Posterior vena cava (tissue), 2 donors: ENCODE measurements at regions of chr2 and their contacts with region 1.

Region 1: DNA sequence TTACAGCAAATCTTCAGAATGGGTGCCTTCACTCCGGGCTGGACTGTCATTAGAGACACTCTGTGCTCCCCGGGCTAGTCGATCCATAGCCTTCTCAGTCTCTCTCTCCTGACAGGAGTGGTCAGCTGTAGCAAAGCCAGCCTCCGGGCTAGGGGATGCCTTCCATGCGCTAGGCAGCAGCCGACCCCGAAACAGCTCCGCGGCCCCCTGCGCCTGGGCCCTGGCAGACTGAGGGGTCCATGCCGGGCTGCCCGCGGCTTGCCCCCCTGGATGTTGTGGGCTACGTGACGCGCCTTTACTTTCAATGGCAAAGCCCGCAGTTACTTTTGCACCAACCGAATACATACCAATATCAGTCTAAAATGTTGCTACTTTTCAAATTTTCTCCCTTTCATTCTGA is 1447.2 kb downstream of the LRP1B start:
- DNase-seq: peak; percentile 71

Region 2: GRCh38 chr2:140108706-140109475 is 574.8 kb before region 1 on chr2:
- intact Hi-C with region 1: loop called in 1 of 2 experiments (anchors 5 kb)
- DNase-seq: no peak